Activated CD8-positive, alpha-beta T cell treated with anti-CD3 and anti-CD28 coated beads, Interleukin-2, amount 10 ng/mL, durations not matched to agents 7 days and 5 days (primary cell): ENCODE measurements at regions of chr6 and their contacts with region 1.

Region 1: DNA sequence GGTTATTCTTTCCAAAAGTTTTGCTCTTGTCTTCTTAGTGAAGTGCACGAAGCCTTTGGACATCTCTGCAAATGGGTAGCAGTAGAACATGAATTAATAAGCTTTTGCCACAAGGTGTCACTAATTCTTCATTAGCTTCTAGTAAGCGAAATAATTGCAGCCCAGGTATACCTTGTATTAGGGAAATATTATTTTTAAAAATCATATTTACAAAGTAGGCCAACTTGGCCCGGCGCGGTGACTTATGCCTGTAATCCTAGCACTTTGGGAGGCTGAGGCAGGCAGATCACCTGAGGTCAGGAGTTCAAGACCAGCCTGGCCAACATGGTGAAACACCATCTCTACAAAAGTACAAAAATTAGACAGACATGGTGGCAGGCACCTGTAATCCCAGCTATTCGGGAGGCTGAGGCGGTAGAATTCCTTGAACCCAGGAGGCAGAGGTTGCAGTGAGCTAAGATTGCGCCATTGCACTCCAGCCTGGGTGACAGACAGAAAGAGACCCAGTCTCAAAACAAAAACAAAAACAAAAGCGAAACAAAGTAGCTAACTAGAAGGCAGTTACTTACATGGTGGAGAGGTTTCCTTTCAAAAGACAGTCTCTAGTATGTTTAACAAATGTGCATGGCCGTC is 8.8 kb upstream of the RSPH3 start:
- DNase-seq: peak; percentile 20
- ATAC-seq: peak; percentile 68
- H3K4me3 Mint-ChIP-seq: peak overlapping the region; percentile 7
- H3K27ac Mint-ChIP-seq: peak overlapping the region; percentile 18
- H3K4me1 Mint-ChIP-seq: peaks cover 19% of the 10 kb centered on the region
- H3K27me3 Mint-ChIP-seq: no peaks in the 10 kb centered on the region

Region 2: GRCh38 chr6:158958504-158959386 is 50.0 kb before region 1 on chr6:
- CTCF ChIA-PET with region 1: no interaction called
- POLR2A ChIA-PET with region 1: no interaction called
- DNase-seq: no peak
- ATAC-seq: peak; percentile 51
- H3K4me3 Mint-ChIP-seq: no peak overlapping the region
- H3K27ac Mint-ChIP-seq: no peak overlapping the region
- H3K4me1 Mint-ChIP-seq: no peaks in the 10 kb centered on the region
- H3K27me3 Mint-ChIP-seq: peaks cover 10% of the 10 kb centered on the region

Region 3: DNA sequence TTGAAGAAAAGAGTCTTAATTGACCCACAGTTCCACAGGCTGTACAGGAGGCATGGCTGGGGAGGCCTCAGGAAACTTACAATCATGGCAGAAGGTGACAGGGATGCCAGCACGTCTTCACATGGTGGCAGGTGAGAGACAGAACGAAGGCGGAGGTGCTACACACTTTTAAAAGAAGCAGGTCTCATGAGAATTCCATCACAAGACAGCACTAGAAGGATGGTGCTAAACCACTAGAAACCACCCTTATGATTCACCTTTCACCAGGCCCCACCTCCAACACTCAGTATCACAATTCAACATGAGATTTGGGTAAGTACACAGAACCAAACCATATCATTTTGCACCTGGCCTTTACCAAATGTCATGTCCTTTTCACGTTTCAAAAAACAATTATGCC is 15.1 kb after region 1 on chr6:
- CTCF ChIA-PET with region 1: interaction called, 57 read pairs
- POLR2A ChIA-PET with region 1: no interaction called
- DNase-seq: peak; percentile 19
- ATAC-seq: no peak
- H3K4me3 Mint-ChIP-seq: no peak overlapping the region
- H3K27ac Mint-ChIP-seq: no peak overlapping the region
- H3K4me1 Mint-ChIP-seq: peaks cover 6% of the 10 kb centered on the region
- H3K27me3 Mint-ChIP-seq: no peaks in the 10 kb centered on the region

Region 4: DNA sequence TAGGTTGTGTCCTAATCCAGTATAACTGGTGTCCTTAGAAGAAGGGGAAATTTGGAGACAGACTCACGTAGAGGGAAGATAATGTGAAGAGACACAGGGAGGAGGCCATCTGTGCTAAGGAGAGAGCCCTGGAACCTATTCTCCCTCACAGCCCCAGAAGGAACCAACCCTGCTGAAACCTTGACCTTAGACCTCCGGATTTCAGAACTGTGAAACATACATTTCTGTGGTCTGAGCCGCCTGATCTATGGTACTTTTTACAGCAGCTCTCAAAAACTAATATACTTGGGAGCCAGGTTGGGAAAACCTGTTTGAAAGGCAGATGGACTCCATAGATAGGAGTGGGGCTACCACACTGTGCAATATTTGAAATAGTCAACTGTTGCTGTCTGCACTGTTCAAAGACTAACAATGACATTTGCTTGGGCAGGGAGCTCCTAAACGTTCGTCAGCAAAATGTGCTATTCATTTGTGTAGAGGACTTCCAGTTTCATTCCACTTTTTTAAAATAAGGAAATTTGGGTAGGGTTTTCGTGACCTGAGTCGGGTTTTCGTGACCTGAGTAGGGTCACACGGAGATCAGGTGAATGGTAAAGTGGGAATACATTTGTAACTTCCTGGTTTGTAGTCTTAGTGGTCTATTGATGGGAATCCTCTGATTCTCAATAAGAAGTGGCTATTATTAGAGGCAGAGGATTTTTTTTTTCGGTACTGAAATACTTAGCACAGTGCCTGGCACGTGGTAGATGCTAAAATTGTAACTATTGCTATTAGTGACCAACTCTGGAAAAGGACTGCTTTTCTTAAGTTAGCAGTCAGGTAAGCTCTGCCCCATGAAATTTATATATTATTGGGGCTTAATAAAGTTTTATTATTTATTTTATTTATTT is 24.6 kb after region 1 on chr6:
- CTCF ChIA-PET with region 1: interaction called, 132 read pairs
- POLR2A ChIA-PET with region 1: interaction called, 3 read pairs
- DNase-seq: no peak
- ATAC-seq: peak; percentile 28
- H3K4me3 Mint-ChIP-seq: no peak overlapping the region
- H3K27ac Mint-ChIP-seq: no peak overlapping the region
- H3K4me1 Mint-ChIP-seq: peaks cover 22% of the 10 kb centered on the region
- H3K27me3 Mint-ChIP-seq: no peaks in the 10 kb centered on the region

Region 5: GRCh38 chr6:159104163-159104925 is 95.6 kb after region 1 on chr6:
- CTCF ChIA-PET with region 1: interaction called, 522 read pairs
- POLR2A ChIA-PET with region 1: interaction called, 5 read pairs
- DNase-seq: peak; percentile 87
- ATAC-seq: peak; percentile 59
- H3K4me3 Mint-ChIP-seq: peak overlapping the region; percentile 44
- H3K27ac Mint-ChIP-seq: peak overlapping the region; percentile 93
- H3K4me1 Mint-ChIP-seq: peaks cover 84% of the 10 kb centered on the region
- H3K27me3 Mint-ChIP-seq: no peaks in the 10 kb centered on the region

Region 6: GRCh38 chr6:159116343-159116742 is 107.6 kb after region 1 on chr6:
- CTCF ChIA-PET with region 1: interaction called, 522 read pairs
- POLR2A ChIA-PET with region 1: no interaction called
- DNase-seq: no peak
- ATAC-seq: no peak
- H3K4me3 Mint-ChIP-seq: no peak overlapping the region
- H3K27ac Mint-ChIP-seq: no peak overlapping the region
- H3K4me1 Mint-ChIP-seq: peaks cover 9% of the 10 kb centered on the region
- H3K27me3 Mint-ChIP-seq: no peaks in the 10 kb centered on the region

Region 7: DNA sequence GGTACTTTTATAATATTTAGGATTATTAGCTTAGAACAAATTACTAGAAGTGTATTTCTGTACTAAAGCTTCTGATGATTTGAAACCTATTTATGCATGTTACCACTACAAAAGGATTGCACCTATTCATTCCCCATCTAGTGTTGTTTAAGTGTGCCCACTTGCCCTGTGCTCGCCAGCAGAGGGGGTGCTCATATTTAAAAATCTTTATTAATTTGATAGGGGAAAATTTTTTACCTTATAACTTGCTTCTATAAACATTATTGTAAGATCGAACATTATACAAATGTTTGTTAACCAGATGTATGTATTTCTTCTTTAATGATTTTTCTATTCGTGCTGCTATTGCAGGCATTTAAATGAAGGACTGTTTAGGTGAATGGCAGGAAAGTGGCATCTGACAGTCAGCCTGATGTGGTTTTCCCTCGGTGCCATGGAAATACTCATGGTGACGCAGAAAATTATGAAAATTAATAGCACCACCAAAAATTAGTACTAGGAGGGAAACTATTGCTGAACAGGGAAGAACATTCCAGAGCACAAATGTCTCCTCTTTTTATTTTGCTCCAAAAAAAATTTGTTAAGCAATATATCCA is 116.3 kb after region 1 on chr6:
- CTCF ChIA-PET with region 1: interaction called, 18 read pairs
- POLR2A ChIA-PET with region 1: no interaction called
- DNase-seq: no peak
- ATAC-seq: no peak
- H3K4me3 Mint-ChIP-seq: no peak overlapping the region
- H3K27ac Mint-ChIP-seq: no peak overlapping the region
- H3K4me1 Mint-ChIP-seq: peaks cover 4% of the 10 kb centered on the region
- H3K27me3 Mint-ChIP-seq: peaks cover 4% of the 10 kb centered on the region